ENCODE measurements at regions of chr1 and their contacts with region 1.

Region 1: DNA sequence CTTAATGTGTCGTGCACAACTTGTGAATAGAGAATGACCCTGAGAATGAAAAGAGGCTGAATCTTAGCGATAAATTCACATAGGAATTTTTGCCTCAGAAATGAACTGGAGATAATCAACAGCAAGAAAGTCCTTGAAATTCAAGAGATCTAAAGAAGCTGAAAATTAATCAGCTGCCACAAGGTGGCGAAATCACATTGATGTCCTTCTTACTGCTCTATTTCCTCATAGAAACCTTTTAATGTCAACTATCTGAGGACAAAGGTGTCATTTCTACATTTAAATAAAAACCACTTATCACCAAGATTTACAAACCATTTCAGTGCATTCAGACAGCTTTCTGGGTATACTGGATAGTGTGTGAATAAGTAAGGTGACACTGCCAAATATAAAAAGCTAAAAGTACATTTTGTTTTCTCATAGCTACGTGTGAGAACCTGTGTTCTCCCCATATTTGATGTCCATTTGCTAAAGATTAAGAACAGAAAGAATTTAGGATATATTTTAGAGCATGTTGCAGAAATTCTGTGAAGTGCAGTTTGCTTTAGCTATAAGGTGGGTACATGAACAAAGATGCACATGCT is 485.3 kb upstream of the PTBP2 start:
- DNase-seq: peak in 1 of 2 donors; percentile 16
- ATAC-seq: no peak
- H3K4me3 ChIP-seq: no peak overlapping the region
- H3K27ac ChIP-seq: no peak overlapping the region
- H3K4me1 ChIP-seq: no peaks in the 10 kb centered on the region
- H3K27me3 ChIP-seq: no peaks in the 10 kb centered on the region
- CTCF ChIP-seq: peak in 8 of 9 donors; percentile 18 to 67 (median 56)

Region 2: DNA sequence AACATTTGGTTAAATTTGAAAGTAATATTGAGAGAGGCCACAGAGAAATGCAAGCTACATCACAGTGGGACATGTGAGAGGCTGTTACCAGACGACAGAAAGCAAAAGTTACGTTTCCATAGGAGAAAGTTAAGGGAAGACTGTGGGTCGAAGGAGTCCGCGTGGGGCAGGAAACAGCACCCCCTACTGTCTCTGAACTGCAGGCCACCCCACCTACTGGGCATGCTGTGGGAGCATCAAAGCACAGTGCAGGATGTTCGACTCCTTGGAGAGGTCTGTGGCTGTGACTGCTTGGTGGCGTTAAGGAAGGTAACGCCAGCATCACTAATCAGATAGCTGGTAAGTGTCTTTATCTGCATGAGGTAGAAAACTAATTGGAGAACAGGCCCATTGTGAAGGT is 609.2 kb after region 1 on chr1:
- intact Hi-C with region 1: loop called in 2 of 10 experiments (anchors 10 kb)
- DNase-seq: peak in 1 of 2 donors; percentile 24
- ATAC-seq: peak in 4 of 8 donors; percentile 65 to 72 (median 68)
- H3K4me3 ChIP-seq: no peak overlapping the region
- H3K27ac ChIP-seq: no peak overlapping the region
- H3K4me1 ChIP-seq: peaks cover 0 to 5% (median 0%) of the 10 kb centered on the region in 9 donors
- H3K27me3 ChIP-seq: no peaks in the 10 kb centered on the region
- CTCF ChIP-seq: peak in 8 of 9 donors; percentile 53 to 71 (median 62)

Measured in heart right ventricle (tissue), 16 donors.